ENCODE measurements at regions of chr20 and their contacts with region 1.

Region 1: GRCh38 chr20:51899668-51900067 is 97.3 kb upstream of the SALL4 start:
- DNase-seq: no peak
- H3K4me3 ChIP-seq: no peak overlapping the region
- H3K27ac ChIP-seq: no peak overlapping the region
- H3K4me1 ChIP-seq: no peaks in the 10 kb centered on the region
- H3K27me3 ChIP-seq: no peaks in the 10 kb centered on the region
- CTCF ChIP-seq: no peak
- POLR2A ChIP-seq: no peak

Region 2: DNA sequence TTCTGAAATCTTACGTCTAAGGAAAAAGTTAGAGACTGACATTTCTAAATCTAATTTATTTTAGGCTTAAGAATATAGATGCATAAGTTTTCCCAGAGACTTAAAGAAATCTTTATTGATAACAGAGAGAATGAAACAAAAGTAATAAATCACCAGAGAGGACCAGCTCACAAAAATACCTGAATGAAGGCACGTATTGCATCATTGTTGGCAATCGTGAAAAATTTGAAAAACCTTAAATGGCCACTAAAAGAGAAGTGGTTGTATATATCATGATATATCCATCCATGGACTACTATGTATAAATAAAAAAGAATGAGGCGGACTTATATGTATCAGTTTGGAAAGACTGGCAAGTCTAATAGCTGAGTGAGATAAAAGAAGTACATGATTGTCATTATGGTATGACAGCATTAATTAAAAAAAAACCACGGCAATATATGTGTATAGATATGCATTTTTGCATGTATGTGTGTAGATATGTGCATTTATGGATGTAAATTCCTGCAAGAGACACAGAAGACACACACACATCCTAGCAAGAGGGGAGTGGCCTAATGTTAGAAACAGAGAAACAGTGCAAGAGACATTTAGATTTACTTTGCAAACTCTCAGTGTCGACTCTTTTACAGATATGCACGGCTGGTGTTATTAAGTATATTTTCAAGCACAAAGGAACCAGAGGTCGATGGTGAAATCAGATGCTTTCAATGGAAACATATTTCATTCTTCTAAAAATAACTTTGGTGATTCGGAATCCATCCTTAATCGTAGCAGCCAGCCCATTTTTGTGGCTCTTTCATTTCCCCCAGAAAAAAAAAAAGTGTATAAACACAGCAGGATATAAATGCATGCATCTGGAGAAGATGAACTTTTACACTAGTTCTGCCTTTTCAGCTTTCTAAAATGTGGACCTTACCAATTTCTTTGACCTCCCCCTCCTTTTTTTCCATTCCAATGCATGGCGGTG is 58.7 kb after region 1 on chr20:
- CTCF ChIA-PET with region 1: no interaction called
- POLR2A ChIA-PET with region 1: interaction called, 11 read pairs
- dilution Hi-C with region 1: no loop called
- intact Hi-C with region 1: no loop called
- DNase-seq: no peak
- H3K4me3 ChIP-seq: peak overlapping the region in 1 of 3 experiments; percentile 49
- H3K27ac ChIP-seq: peak overlapping the region; percentile 58
- H3K4me1 ChIP-seq: peaks cover 24% of the 10 kb centered on the region
- H3K27me3 ChIP-seq: no peaks in the 10 kb centered on the region
- CTCF ChIP-seq: no peak
- POLR2A ChIP-seq: no peak

Measured in endothelial cell of umbilical vein (primary cell).